ENCODE measurements at regions of chr20 and their contacts with region 1.

Region 1: DNA sequence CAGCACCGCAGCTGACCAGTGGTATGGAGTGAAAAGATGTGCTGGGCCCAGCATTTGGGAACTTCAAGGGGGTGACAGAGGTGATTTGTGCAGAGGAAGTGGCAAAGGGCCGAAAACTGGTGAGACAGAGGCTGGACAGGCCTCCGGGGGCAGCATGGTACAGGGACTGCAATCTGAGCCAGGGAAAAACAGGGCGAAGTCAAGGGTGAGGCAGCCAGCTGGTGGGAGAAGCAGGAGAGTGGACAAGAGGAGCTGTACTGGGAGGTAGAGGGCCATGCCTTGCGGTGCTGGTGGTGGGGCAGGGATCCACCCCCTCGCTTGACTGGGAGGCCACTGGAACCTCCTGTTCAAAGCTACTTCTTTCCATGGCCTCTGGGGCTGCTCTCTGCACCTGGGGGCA is 7.3 kb upstream of the GFRA4 start:
- DNase-seq: no peak
- H3K4me3 ChIP-seq: no peak overlapping the region
- H3K27ac ChIP-seq: no peak overlapping the region
- H3K4me1 ChIP-seq: peaks cover 0 to 10% (median 3%) of the 10 kb centered on the region in 4 experiments; a peak in 4 of 7 replicates
- H3K27me3 ChIP-seq: peaks cover 6 to 25% (median 19%) of the 10 kb centered on the region in 4 experiments; a peak in 6 of 7 replicates
- CTCF ChIP-seq: peak; percentile 40 to 58 (median 58); a peak in 3 of 4 replicates
- EP300 ChIP-seq: no peak
- POLR2A ChIP-seq: no peak
- RAD21 ChIP-seq: peak; percentile 25 to 43; a peak in 3 of 4 replicates

Region 2: DNA sequence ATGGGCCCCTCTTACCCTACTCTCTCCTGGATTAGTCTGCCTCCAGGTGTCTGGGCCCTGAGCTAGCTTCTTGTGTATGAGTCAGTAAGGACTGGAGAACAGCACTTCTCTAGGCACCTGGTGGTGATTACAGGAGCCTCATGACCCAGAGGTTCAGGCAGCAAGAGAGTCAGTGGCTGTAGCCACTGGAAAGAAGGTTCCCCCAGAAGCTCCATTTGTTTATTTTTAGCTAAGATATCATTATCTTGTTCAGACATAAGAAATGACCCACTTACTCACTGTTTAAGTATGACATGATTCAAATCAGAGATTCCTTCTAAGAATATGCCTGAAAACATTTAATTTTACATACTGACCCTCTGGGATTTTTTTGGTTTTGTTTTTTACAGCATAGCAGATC is 407.9 kb before region 1 on chr20:
- CTCF ChIA-PET with region 1: no interaction called
- POLR2A ChIA-PET with region 1: no interaction called
- DNase-seq: no peak
- H3K4me3 ChIP-seq: no peak overlapping the region
- H3K27ac ChIP-seq: no peak overlapping the region
- H3K4me1 ChIP-seq: no peaks in the 10 kb centered on the region
- H3K27me3 ChIP-seq: no peaks in the 10 kb centered on the region
- CTCF ChIP-seq: no peak
- EP300 ChIP-seq: no peak
- POLR2A ChIP-seq: no peak
- RAD21 ChIP-seq: no peak

Region 3: GRCh38 chr20:3658716-3659491 is 11.6 kb before region 1 on chr20:
- CTCF ChIA-PET with region 1: interaction called, 28 read pairs
- POLR2A ChIA-PET with region 1: no interaction called
- DNase-seq: no peak
- H3K4me3 ChIP-seq: no peak overlapping the region
- H3K27ac ChIP-seq: no peak overlapping the region
- H3K4me1 ChIP-seq: peaks cover 0 to 4% (median 0%) of the 10 kb centered on the region in 4 experiments; a peak in 3 of 7 replicates
- H3K27me3 ChIP-seq: peaks cover 0 to 2% (median 0%) of the 10 kb centered on the region in 4 experiments; a peak in 1 of 7 replicates
- CTCF ChIP-seq: no peak
- EP300 ChIP-seq: no peak
- POLR2A ChIP-seq: no peak
- RAD21 ChIP-seq: no peak

Measured in H1 (cell line).